Heart left ventricle (tissue), 16 donors: ENCODE measurements at regions of chr7 and their contacts with region 1.

Region 1: GRCh38 chr7:44621020-44621722 is 14.7 kb downstream of the OGDH start:
- DNase-seq: peak in 1 of 5 donors; percentile 68
- ATAC-seq: peak in 3 of 4 donors; percentile 54 to 69 (median 56)
- H3K4me3 ChIP-seq: no peak overlapping the region
- H3K27ac ChIP-seq: peak overlapping the region in 10 of 12 donors; percentile 10 to 84 (median 54)
- H3K4me1 ChIP-seq: peaks cover 4 to 96% (median 64%) of the 10 kb centered on the region in 12 donors
- H3K27me3 ChIP-seq: no peaks in the 10 kb centered on the region
- CTCF ChIP-seq: no peak
- POLR2A ChIP-seq: no peak

Region 2: DNA sequence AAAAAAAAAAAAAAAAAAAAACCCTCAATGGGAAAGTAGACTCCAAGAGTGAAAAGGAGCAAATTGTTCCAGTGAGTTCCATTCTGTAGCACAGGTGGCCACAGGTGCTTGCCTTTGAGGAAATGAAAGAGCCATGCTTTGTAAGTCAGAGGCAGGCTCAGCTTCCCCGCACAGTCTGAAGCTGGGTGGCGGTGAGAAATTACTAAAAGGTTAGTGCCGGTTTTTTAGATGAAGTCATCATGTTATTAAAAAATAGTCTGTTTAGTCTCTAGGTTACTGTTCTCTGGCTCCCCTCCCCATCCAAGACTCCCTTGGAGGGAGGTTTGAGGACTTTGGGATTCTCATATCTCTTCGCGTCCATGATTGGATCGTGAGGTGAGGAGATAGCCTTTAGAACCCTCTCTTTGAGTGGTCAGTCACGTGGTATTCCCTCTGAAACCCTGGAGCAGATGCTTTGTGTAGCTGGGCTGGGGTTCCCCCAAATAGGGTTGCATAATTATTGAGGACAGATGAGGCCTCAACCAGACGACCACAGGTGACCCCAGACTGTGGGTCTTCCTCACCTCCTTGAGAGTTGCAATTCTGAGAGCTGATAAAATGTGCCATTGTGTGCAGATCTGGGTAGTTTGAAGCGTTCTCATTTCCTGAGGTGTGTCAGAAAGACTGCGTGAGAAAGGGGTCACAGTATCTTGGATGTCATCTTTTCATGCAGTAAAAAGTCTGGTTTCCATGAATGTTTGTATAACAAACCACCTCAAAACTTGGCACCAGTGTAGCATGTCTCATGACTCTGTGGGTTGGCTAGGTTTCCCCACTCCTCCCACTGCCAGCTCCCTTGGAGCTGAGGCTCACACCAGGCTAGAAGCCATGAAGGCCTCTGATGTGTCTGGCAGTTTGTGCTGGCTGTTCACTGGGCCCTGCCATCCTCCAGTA is 12.3 kb after region 1 on chr7:
- intact Hi-C with region 1: loop called in 1 of 10 experiments (anchors 2 kb)
- DNase-seq: peak in 4 of 5 donors; percentile 57 to 78 (median 66)
- ATAC-seq: peak; percentile 59 to 72 (median 66)
- H3K4me3 ChIP-seq: no peak overlapping the region
- H3K27ac ChIP-seq: peak overlapping the region; percentile 62 to 97 (median 85)
- H3K4me1 ChIP-seq: peaks cover 0 to 99% (median 64%) of the 10 kb centered on the region in 12 donors
- H3K27me3 ChIP-seq: no peaks in the 10 kb centered on the region
- CTCF ChIP-seq: no peak
- POLR2A ChIP-seq: no peak

Region 3: DNA sequence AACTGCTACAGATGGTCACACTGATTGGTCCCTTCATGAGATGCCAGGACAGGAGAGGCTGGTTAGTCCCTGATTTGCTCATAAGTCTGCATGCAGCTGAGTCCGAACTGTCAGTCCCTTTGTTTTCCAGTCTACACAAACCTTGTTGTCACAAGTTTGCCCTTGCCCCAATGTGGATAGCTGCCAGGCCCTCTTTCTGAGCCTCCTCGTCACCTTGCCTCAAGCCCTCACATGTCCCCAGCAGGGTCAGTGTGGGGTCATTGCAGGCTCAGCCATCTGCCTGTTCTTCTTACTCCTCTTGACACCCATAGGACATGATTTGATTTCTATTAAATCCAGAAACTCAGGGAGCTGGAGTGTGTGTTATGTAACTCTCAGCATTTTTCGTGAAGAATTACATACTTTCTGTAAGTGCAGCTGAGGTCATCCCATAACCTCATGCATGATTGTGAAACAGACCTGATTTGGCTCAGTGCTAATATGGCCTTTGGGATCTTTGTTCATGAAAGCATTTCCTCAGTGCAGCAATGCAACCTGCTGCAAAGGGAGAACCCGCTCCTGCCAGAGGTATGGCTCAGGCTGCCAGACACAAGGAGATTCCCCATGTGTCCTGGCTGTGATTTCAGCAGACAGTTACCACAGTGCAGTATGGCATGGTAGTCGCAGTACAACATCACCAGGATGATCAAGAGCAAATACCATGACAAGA is 57.5 kb after region 1 on chr7:
- intact Hi-C with region 1: no loop called
- DNase-seq: peak in 4 of 5 donors; percentile 50 to 82 (median 60)
- ATAC-seq: peak; percentile 62 to 81 (median 68)
- H3K4me3 ChIP-seq: no peak overlapping the region
- H3K27ac ChIP-seq: peak overlapping the region in 11 of 12 donors; percentile 44 to 78 (median 68)
- H3K4me1 ChIP-seq: peaks cover 0 to 30% (median 17%) of the 10 kb centered on the region in 12 donors
- H3K27me3 ChIP-seq: no peaks in the 10 kb centered on the region
- CTCF ChIP-seq: no peak
- POLR2A ChIP-seq: no peak